ENCODE measurements at regions of chr3 and their contacts with region 1.

Region 1: GRCh38 chr3:141436180-141436579 is 50.6 kb upstream of the RASA2 start:
- DNase-seq: peak; percentile 24
- H3K4me3 Mint-ChIP-seq: peak overlapping the region; percentile 5
- H3K27ac Mint-ChIP-seq: peak overlapping the region; percentile 55
- H3K4me1 Mint-ChIP-seq: peaks cover 48% of the 10 kb centered on the region
- H3K27me3 Mint-ChIP-seq: no peaks in the 10 kb centered on the region
- CTCF ChIP-seq: no peak

Region 2: DNA sequence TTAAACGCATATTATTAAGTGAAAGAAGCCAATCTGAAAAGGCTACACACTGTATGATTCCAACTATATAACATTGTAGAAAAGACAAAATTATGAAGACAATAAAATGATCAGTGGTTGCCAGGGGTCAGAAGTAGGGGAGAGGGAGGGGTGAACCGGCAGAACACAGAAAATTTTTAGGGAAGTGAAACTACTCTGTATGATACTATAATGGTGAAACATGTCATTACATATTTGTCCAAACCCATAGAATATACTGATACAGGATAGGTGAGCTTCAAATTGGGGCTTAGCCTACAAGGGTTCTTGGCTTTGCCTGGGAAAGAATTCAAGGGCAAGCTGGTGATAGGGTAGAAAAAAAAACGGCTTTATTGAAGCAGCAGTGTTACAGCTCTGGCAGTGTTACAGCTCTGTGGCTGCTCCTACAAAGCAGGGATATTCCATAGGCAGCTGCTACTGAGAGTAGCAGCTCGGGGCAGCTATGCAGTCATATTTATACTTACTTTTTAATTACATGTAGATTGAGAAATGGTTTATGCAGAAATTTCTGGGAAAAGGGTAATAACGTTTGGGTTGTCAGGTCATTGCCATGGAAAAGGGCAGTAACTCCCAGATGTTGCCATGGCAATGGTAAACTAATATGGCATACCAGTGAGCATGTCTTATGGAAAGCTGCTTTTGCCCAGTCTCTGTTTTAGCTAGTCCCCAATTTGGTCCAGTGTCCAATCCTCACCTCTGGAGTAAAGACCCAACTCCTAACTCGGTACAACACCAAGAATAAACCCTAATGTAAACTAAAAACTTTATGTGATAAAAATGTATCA is 619.6 kb before region 1 on chr3:
- CTCF ChIA-PET with region 1: no interaction called
- intact Hi-C with region 1: no loop called
- DNase-seq: no peak
- H3K4me3 Mint-ChIP-seq: no peak overlapping the region
- H3K27ac Mint-ChIP-seq: no peak overlapping the region
- H3K4me1 Mint-ChIP-seq: no peaks in the 10 kb centered on the region
- H3K27me3 Mint-ChIP-seq: peaks cover 11% of the 10 kb centered on the region
- CTCF ChIP-seq: no peak

Region 3: GRCh38 chr3:141388823-141389621 is 47.2 kb before region 1 on chr3:
- CTCF ChIA-PET with region 1: no interaction called
- intact Hi-C with region 1: no loop called
- DNase-seq: no peak
- H3K4me3 Mint-ChIP-seq: no peak overlapping the region
- H3K27ac Mint-ChIP-seq: no peak overlapping the region
- H3K4me1 Mint-ChIP-seq: no peaks in the 10 kb centered on the region
- H3K27me3 Mint-ChIP-seq: no peaks in the 10 kb centered on the region
- CTCF ChIP-seq: no peak

Region 4: GRCh38 chr3:141402476-141403171 is 33.6 kb before region 1 on chr3:
- CTCF ChIA-PET with region 1: no interaction called
- intact Hi-C with region 1: loop called (anchors 5 kb)
- DNase-seq: peak; percentile 67
- H3K4me3 Mint-ChIP-seq: peak overlapping the region; percentile 49
- H3K27ac Mint-ChIP-seq: no peak overlapping the region
- H3K4me1 Mint-ChIP-seq: no peaks in the 10 kb centered on the region
- H3K27me3 Mint-ChIP-seq: no peaks in the 10 kb centered on the region
- CTCF ChIP-seq: no peak

Measured in Calu3 (cell line).